Heart right ventricle (tissue), 16 donors: ENCODE measurements at regions of chr2 and their contacts with region 1.

Region 1: DNA sequence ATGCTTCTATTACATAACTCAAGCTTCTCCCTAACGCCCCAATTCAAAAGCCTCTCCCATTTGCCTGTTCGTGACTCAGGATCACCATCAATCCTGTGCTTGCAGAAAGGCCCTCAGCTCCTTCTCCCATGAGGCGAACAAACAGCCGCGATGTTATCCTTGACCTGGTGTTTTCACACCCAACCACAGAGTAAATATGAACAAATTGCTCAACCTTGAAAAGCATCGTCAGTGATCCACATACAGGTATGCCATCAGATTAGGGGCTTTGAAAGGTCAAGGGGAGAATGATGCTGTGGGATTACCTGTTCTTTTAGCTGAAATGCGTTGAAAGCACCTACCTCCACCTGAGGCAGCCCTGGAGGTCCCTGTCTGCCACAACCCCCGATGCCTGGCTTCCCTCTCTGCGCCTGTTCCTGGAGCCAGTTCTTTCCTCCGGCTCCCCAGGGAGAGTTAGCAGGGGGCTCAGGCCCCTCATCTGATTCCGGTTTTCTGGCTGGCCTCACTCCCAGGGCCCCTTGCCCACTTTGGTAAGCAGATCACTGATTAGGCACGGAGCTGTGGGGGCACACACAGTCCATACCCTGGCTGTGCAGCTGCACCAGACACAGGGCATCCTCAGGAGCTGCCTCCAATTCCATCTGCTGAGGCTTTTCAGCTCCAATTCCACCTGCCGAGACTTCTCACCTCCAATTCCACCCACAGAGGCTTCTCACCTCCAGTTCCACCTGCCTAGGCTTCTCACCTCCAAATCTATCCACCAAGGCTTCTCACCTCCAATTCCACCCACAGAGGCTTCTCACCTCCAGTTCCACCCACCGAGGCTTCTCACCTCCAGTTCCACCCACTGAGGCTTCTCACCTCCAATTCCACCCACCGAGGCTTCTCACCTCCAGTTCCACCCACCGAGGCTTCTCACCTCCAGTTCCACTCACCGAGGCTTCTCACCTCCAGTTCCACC is 39.3 kb upstream of the ODC1 start:
- DNase-seq: no peak
- ATAC-seq: no peak
- H3K4me3 ChIP-seq: no peak overlapping the region
- H3K27ac ChIP-seq: no peak overlapping the region
- H3K4me1 ChIP-seq: no peaks in the 10 kb centered on the region
- H3K27me3 ChIP-seq: peaks cover 0 to 39% (median 22%) of the 10 kb centered on the region in 7 donors
- CTCF ChIP-seq: no peak

Region 2: DNA sequence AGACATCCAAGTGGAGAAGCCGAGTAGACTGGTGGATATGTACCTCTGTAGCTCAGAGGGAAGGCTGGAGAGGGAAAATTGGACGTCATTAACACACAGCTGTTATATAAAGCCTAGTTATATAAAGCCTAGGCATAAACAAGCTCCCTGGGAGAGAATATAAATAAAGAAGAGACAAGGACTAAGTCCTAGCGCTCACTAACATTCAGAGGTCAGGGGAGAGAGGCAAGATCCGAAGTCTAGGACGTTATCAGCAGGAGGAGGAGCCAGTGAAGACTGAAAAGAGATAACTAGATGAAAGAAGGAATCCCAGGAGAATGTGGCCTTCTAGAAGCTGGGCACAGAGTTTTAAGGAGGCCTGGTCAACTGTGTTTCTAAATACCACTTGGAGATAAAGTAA is 147.1 kb after region 1 on chr2:
- intact Hi-C with region 1: loop called in 1 of 10 experiments (anchors 10 kb)
- DNase-seq: no peak
- ATAC-seq: peak in 7 of 8 donors; percentile 55 to 79 (median 65)
- H3K4me3 ChIP-seq: no peak overlapping the region
- H3K27ac ChIP-seq: peak overlapping the region in 1 of 10 donors; percentile 33
- H3K4me1 ChIP-seq: no peaks in the 10 kb centered on the region
- H3K27me3 ChIP-seq: no peaks in the 10 kb centered on the region
- CTCF ChIP-seq: no peak